ENCODE measurements at regions of chr1 and their contacts with region 1.

Region 1: GRCh38 chr1:9004700-9005394 is 21.4 kb downstream of the SLC2A7 start:
- DNase-seq: peak; percentile 90
- ATAC-seq: peak; percentile 87

Region 2: GRCh38 chr1:9099555-9099954 is 94.7 kb after region 1 on chr1:
- intact Hi-C with region 1: loop called (anchors 10 kb)
- DNase-seq: no peak
- ATAC-seq: no peak